ENCODE measurements at regions of chr15 and their contacts with region 1.

Region 1: GRCh38 chr15:78872972-78873792 is 492 bp downstream of the MORF4L1 start:
- DNase-seq: peak; percentile 84
- H3K4me3 ChIP-seq: peak overlapping the region; percentile 89
- H3K27ac ChIP-seq: peak overlapping the region; percentile 100
- H3K4me1 ChIP-seq: peaks cover 9% of the 10 kb centered on the region
- H3K27me3 ChIP-seq: no peaks in the 10 kb centered on the region
- CTCF ChIP-seq: no peak

Region 2: DNA sequence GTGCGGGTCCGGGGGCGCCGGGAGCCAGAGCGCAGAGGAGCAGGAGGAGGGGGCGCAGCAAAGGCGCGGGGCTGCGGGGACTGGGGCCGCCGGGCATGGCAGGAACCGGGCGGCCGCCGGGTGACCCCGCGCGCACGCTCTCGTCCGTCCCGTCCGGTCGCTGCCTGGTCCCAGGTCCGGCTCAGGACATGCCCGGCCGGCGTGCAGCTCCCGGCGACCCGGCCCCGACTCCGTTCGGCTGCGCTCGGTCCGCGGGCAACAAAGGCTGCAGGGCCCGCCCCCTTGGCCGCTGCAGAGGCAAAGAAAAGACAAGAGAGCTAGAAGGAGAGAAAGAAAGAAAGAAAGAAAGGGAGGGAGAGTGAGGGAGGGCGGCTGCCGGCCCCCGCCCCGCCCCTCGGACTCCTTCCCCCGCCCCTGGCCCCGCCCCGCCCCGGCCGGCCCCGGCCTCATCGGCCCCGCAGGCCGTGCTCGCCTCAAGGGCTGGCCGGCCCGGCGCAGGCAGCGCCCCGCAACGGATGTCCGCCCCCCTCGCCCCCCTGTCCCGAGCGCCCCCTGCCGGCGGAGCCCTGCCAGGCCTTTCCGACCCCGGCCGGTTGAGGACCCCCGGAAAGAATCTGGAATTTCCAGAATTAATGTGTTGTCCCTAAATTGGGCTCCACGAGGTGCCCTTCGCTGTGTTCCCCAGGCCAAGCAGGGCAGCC is 61.9 kb before region 1 on chr15 and contains the start of gene ADAMTS7:
- intact Hi-C with region 1: loop called (anchors 5 kb)
- DNase-seq: peak; percentile 65
- H3K4me3 ChIP-seq: peak within 1 kb of the TSS; percentile 81
- H3K27ac ChIP-seq: peak within 1 kb of the TSS; percentile 16
- H3K4me1 ChIP-seq: peaks cover 9% of the 10 kb centered on the region
- H3K27me3 ChIP-seq: peaks cover 23% of the 10 kb centered on the region
- CTCF ChIP-seq: peak; percentile 38
- total RNA-seq, gene ADAMTS7: 1.6 to 1.8 TPM